ENCODE measurements at regions of chr9 and their contacts with region 1.

Region 1: DNA sequence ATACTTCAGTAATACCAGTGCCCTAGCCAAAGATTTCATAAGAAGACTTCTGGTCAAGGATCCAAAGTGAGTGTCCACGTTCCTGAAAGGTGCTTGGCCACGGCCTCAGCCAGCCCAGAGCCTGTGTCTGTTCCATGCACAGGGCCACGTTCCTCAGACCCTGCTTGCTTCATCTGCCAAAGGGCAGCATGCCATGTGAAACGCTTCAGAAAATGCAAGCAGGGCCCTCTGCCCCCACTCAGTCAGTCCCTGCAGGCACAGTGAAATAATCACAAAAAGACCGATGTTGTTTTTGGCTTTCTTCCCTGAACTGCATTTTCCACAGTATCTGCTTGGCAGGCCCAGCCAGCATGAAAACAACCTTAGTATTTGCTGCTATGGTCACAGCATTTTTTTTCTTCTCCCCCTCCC is 85.5 kb upstream of the CTSL start:
- DNase-seq: no peak
- ATAC-seq: peak in 2 of 4 donors; percentile 57 to 68
- H3K4me3 ChIP-seq: no peak overlapping the region
- H3K27ac ChIP-seq: peak overlapping the region in 1 of 12 donors; percentile 44
- H3K4me1 ChIP-seq: peaks cover 0 to 12% (median 0%) of the 10 kb centered on the region in 12 donors
- H3K27me3 ChIP-seq: no peaks in the 10 kb centered on the region
- CTCF ChIP-seq: no peak
- POLR2A ChIP-seq: no peak

Region 2: GRCh38 chr9:87516222-87516925 is 124.0 kb before region 1 on chr9:
- intact Hi-C with region 1: loop called in 1 of 10 experiments (anchors 10 kb)
- DNase-seq: peak; percentile 50 to 74 (median 63)
- ATAC-seq: peak in 3 of 4 donors; percentile 78 to 82 (median 80)
- H3K4me3 ChIP-seq: no peak overlapping the region
- H3K27ac ChIP-seq: peak overlapping the region in 2 of 12 donors; percentile 69 to 77
- H3K4me1 ChIP-seq: peaks cover 0 to 70% (median 0%) of the 10 kb centered on the region in 12 donors
- H3K27me3 ChIP-seq: no peaks in the 10 kb centered on the region
- CTCF ChIP-seq: no peak
- POLR2A ChIP-seq: no peak

Measured in heart left ventricle (tissue), 16 donors.